HCT116 (cell line): ENCODE measurements at regions of chr16 and their contacts with region 1.

Region 1: GRCh38 chr16:3188925-3189825 is 1.2 kb downstream of the OR1F1 start:
- DNase-seq: no peak
- ATAC-seq: peak; percentile 26
- H3K4me3 ChIP-seq: no peak overlapping the region
- H3K27ac ChIP-seq: no peak overlapping the region
- H3K4me1 ChIP-seq: peaks cover 11 to 42% of the 10 kb centered on the region in 2 experiments; a peak in 3 of 4 replicates
- H3K27me3 ChIP-seq: no peaks in the 10 kb centered on the region
- CTCF ChIP-seq: no peak
- POLR2A ChIP-seq: no peak
- RAD21 ChIP-seq: no peak

Region 2: DNA sequence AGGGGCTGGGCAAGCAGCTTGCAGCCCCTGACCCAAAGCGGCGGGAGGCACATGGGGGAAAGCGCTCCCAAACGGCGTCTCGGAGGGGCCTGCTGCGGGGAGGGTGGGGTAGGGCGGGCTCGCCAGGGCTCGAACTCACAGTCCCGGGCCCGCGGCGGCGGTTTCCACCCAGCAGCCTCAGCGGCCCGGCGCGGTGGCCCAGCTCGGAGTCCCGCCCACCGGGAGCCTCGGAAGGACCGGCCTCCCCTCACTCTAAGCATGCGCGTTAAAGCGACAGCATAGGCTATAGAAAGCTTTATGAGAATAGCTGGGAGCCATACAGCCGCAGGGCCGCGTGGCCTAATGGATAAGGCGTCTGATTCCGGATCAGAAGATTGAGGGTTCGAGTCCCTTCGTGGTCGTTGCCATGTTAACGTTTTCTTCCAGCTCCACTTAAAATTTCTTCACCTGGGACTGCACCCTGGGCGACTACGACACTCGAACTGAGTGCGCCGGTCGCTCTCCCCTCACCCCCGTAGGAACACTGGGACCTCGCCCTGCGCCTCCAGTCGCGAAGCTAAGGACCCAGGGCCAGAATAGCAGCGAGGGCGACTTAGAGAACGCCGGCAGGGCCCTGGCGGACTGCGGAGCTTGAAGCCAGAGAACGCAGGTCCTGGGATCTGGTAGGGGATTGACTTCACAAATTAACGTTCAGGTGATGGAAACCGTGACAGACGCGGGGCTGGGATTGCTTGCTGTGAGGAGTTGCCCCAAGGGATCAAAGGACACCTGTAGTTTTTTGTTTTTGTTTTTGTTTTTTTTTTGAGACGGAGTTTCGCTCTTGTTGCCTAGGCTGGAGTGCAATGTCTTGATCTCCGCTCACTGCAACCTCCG is 38.6 kb before region 1 on chr16:
- CTCF ChIA-PET with region 1: interaction called, 8 read pairs
- POLR2A ChIA-PET with region 1: interaction called, 3 read pairs
- RAD21 ChIA-PET with region 1: no interaction called
- intact Hi-C with region 1: loop called (anchors 5 kb)
- DNase-seq: peak; percentile 92
- ATAC-seq: peak; percentile 77
- H3K4me3 ChIP-seq: peak overlapping the region; percentile 54 to 65
- H3K27ac ChIP-seq: peak overlapping the region; percentile 95
- H3K4me1 ChIP-seq: peaks cover 8 to 38% of the 10 kb centered on the region in 2 experiments
- H3K27me3 ChIP-seq: no peaks in the 10 kb centered on the region
- CTCF ChIP-seq: no peak
- POLR2A ChIP-seq: no peak
- RAD21 ChIP-seq: no peak

Region 3: DNA sequence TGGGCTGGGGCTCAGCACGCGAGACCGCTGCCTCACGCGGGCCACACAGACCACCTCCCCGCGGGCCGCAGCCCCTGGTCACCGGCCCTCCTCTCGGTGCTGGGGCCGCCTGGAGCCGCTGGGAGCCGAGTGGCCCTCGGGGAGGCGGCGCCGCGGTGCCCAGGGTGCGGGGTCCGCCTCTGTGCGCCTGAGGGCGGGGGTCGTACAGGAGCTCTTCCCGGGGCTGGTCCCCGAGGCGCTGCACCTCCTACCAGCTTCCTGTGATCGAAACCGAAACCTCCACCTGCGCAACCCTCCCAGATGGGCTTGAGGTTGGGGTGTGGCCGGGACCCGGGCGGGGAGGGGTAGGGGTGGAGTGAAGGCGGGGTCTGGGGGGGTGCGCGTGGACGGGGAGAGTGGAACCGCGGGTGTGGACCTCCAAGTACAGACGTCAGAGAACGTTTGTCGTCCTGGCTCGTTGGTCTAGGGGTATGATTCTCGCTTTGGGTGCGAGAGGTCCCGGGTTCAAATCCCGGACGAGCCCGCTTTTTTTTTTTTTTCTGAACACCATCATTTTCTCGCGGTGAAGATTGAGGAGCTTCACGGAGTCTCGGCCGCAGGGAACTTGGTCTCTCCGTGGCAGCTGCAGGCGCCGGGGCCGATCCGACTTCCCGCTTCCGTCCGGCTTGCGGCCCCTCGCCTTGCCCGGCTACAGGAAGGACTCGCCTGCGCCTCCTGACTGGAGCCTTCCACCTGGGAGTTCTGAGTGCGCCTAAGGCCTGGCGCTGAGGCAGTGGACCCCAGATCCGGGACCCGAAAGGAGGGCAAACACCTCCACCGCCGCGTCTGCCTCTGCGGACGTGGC is 30.5 kb before region 1 on chr16:
- CTCF ChIA-PET with region 1: no interaction called
- POLR2A ChIA-PET with region 1: interaction called, 4 read pairs
- RAD21 ChIA-PET with region 1: no interaction called
- intact Hi-C with region 1: loop called (anchors 1 kb)
- DNase-seq: peak; percentile 88
- ATAC-seq: peak; percentile 62
- H3K4me3 ChIP-seq: peak overlapping the region; percentile 67 to 78
- H3K27ac ChIP-seq: peak overlapping the region; percentile 91
- H3K4me1 ChIP-seq: peaks cover 14 to 60% of the 10 kb centered on the region in 2 experiments; a peak in 3 of 4 replicates
- H3K27me3 ChIP-seq: no peaks in the 10 kb centered on the region
- CTCF ChIP-seq: no peak
- POLR2A ChIP-seq: peak; percentile 40
- RAD21 ChIP-seq: no peak

Region 4: GRCh38 chr16:3457434-3458252 is 268.5 kb after region 1 on chr16:
- CTCF ChIA-PET with region 1: no interaction called
- POLR2A ChIA-PET with region 1: no interaction called
- RAD21 ChIA-PET with region 1: interaction called in 1 of 2 experiments, 3 read pairs
- intact Hi-C with region 1: loop called (anchors 5 kb)
- DNase-seq: peak; percentile 68
- ATAC-seq: peak; percentile 91
- H3K4me3 ChIP-seq: peak overlapping the region; percentile 79 to 93
- H3K27ac ChIP-seq: peak overlapping the region; percentile 93
- H3K4me1 ChIP-seq: peaks cover 17 to 32% of the 10 kb centered on the region in 2 experiments
- H3K27me3 ChIP-seq: no peaks in the 10 kb centered on the region
- CTCF ChIP-seq: peak in 2 of 3 experiments; percentile 33 to 41; a peak in 3 of 6 replicates
- POLR2A ChIP-seq: peak; percentile 47
- RAD21 ChIP-seq: 0 out of 2 replicates have a peak, but pooled peaks have one; percentile 14